ENCODE measurements at regions of chr5 and their contacts with region 1.

Region 1: DNA sequence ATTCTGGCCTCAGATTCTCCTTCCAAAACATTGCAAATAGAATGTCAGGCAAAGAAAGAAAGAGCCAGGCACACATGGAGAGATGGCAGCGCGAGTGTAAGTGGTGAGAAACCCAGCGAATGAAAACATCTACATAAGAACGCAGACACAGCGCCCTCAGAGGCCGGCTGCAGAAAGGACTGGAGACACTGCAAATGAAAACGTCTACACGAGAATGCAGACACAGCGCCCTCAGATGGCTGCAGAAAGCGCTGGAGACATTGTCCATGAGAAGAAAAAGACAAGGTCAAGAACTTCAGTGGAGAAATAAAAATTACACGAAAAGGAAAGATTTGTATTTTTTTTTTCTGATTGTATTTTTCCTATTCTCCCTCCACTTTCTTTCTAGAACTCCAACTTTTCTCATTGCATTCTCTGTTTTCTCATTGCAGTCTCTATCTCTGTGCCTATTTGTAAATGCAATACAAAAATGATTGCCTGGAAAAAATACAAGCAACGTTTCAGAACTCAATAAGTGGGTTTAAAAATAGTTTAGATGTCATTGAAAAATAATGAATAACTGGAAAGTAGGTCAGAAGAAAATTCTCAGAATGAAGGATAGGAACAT is 117.9 kb upstream of the LPCAT1 start:
- DNase-seq: peak; percentile 90
- H3K4me3 ChIP-seq: no peak overlapping the region
- H3K27ac ChIP-seq: no peak overlapping the region
- H3K4me1 ChIP-seq: peaks cover 4 to 21% (median 11%) of the 10 kb centered on the region in 6 donors
- H3K27me3 ChIP-seq: peaks cover 4 to 37% (median 27%) of the 10 kb centered on the region in 7 donors
- CTCF ChIP-seq: peak; percentile 44 to 91 (median 87)
- POLR2A ChIP-seq: no peak

Region 2: DNA sequence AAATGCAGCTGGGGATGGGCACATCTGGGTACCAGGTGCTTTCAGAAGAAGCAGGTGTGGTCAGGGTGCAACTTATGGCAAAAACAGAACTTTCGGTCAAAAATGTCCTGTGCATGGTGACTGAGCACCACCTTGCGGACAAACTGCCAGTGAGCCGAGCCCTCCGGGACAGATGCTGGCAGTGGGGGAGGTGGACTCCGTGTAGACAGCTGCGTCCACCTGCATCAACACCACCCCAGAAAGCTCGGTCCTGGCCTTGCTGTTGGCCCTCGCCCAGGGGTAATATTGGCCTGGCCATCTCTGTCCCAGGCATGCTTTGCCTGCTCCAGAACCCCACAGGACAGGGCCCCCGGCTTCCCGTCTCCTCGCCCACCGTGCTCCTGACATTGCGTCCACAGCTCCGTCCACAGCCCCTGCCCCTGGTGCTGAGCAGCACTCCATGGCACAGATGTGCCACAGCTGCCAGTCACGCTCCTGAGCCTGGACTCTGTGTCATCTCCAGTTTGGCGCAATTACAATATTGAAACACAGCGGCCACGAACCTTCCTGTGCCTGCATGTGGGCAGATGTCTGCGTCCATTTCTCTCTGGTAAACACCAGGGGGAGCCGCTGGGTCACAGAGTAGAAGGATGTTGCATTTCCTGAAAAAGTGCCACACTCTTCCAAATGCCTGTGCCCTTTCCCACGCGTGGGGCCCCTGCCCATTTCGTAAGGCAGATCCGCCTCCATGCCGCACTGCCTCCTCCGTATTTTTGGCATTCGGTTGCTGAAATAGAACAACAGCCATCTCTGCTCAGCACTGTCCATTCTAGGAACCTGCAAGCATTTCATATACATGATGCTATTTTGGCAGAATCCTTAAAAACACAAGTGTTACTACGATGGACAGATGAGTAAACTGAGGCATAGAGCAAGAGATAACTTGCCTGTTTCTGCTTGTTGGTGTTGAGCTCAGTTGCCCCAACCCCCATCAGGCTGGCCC is 473.6 kb before region 1 on chr5:
- intact Hi-C with region 1: loop called (anchors 5 kb)
- DNase-seq: no peak
- H3K4me3 ChIP-seq: peak overlapping the region in 3 of 8 donors; percentile 20 to 58 (median 28)
- H3K27ac ChIP-seq: peak overlapping the region in 1 of 8 donors; percentile 5
- H3K4me1 ChIP-seq: peaks cover 9 to 17% (median 12%) of the 10 kb centered on the region in 6 donors
- H3K27me3 ChIP-seq: peaks cover 0 to 21% (median 0%) of the 10 kb centered on the region in 7 donors
- CTCF ChIP-seq: peak; percentile 65 to 88 (median 76)
- POLR2A ChIP-seq: no peak

Region 3: DNA sequence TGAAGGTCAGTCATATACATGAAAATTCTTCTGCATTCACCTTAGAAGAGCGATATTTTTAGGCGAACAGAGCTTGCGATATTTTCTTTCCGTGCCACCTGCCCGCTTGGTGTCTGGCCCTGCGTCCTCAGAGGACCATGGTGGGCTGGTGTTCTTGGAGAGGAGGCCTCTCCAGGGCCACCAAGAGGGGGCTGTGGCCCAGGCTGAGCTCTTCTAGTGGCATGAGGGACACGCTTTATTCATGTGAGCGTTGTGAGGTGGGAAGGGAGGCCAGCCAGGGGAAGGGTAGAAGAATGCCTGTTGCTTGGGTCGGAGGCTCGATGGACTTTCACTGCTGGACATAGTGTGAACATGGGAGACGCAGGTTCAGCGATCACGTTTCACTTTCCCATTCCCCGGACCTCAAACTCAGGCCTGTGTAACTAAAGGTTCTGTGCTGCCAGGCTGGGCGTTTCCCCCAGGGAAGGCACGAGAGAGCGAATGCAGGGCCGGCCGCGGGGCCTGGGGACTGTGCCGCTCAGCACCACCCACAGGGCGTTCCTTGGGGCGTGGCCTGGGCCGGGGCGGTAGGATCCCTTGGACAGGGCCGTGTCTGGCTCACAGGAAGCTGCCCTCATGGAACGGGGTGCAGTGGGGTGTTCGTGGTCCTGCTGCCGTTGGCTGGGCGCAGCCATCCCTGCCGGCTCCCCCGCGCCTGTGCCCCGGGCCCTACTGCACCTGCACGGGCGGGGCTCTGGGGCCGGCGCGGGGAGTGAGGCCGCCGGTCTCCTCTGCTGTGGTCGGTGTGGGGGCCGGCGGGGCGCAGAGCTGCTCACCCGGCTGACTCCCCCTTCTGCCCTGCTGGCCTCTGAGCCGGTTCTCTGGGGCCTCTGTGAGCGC is 256.0 kb before region 1 on chr5:
- intact Hi-C with region 1: loop called (anchors 10 kb)
- DNase-seq: peak; percentile 99
- H3K4me3 ChIP-seq: peak overlapping the region; percentile 42 to 80 (median 60)
- H3K27ac ChIP-seq: peak overlapping the region; percentile 82 to 98 (median 92)
- H3K4me1 ChIP-seq: peaks cover 5 to 31% (median 20%) of the 10 kb centered on the region in 6 donors
- H3K27me3 ChIP-seq: peaks cover 0 to 39% (median 0%) of the 10 kb centered on the region in 7 donors
- CTCF ChIP-seq: peak in 4 of 11 experiments; percentile 10 to 23 (median 12)
- POLR2A ChIP-seq: peak in 2 of 3 donors; percentile 76 to 78

Region 4: DNA sequence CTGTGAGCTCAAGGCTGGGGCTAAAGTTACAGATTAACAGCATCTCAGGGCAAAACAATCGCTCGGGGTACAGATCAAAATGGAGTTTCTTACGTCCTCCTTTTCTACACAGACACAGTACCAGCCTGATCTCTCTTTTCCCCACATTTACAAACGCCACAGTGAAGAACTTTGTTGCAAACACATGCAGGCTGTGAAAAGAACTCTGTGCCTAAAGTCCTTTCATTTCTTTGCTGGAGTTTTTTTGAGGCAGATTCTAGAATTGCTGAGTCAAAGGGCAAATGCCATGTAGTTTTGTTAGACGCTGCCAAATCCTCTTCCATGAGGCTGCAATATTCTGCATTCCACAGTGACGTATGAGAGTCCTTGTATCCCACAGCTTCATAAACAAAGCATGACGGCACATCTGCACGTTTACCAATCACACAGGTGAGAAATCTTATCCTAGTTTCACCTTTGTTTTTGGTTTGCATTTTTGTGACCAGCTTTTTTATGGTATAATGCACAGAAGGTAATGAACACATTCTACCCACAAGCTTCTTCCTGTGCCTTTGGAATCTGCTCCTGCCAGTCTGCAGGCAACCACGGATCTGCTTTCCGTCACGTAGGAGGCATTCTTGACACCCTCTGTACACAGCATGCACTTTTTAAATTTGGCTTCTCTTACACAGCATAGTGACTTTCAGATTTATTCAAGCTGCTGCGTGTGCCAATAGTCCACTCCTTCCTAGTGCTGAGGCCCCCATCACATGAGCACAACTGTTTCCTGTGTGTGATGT is 73.3 kb before region 1 on chr5:
- intact Hi-C with region 1: no loop called
- DNase-seq: no peak
- H3K4me3 ChIP-seq: no peak overlapping the region
- H3K27ac ChIP-seq: peak overlapping the region in 7 of 8 donors; percentile 4 to 70 (median 55)
- H3K4me1 ChIP-seq: peaks cover 0 to 17% (median 6%) of the 10 kb centered on the region in 6 donors
- H3K27me3 ChIP-seq: no peaks in the 10 kb centered on the region
- CTCF ChIP-seq: no peak
- POLR2A ChIP-seq: no peak

Measured in spleen (tissue), 13 donors.